Activated naive CD4-positive, alpha-beta T cell treated with anti-CD3 and anti-CD28 coated beads for 36 hours (primary cell): ENCODE measurements at regions of chr13 and their contacts with region 1.

Region 1: DNA sequence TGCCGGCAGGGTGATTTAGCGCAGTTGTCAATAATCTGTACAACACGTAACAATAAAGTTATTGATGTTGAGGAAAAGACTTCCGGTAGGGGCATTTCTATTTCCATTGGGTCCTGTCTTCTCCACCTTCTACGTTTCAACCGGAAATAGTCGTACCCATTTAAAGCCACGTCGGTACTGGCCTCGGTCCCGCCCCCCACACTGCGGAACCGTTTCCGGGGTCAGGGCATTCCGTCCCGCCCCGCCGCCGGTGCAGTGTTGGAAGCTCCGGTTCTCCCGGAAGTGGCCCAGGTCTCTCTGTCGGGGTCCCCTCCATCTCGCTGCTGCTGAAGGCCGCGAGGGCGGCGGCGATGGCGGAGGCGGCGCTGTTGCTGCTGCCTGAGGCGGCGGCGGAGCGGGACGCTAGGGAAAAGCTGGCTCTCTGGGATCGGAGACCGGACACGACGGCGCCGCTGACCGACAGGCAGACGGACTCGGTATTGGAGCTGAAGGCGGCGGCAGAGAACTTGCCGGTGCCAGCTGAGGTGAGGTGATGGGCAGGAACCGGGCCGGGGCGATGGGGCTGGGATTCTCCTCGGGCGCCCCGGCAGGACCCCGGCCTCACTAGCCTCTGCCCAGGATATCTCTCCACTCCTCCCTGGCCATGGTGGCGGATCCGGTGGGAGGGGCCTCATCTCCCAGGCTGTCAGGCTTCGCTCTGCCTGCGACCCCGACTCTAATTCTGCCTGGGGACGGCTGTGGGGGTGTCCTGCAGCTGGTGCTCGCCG is at the start of gene COG3:
- DNase-seq: peak; percentile 97
- H3K4me3 Mint-ChIP-seq: peak within 1 kb of the TSS; percentile 88
- H3K27ac Mint-ChIP-seq: peak within 1 kb of the TSS; percentile 92
- H3K4me1 Mint-ChIP-seq: peaks cover 59% of the 10 kb centered on the region
- H3K27me3 Mint-ChIP-seq: no peaks in the 10 kb centered on the region
- total RNA-seq, gene COG3: 19.1 to 19.3 TPM

Region 2: GRCh38 chr13:44141725-44142539 is 1322.9 kb before region 1 on chr13:
- CTCF ChIA-PET with region 1: no interaction called
- intact Hi-C with region 1: loop called (anchors 5 kb)
- DNase-seq: peak; percentile 95
- H3K4me3 Mint-ChIP-seq: peak overlapping the region; percentile 89
- H3K27ac Mint-ChIP-seq: peak overlapping the region; percentile 86
- H3K4me1 Mint-ChIP-seq: peaks cover 14% of the 10 kb centered on the region
- H3K27me3 Mint-ChIP-seq: no peaks in the 10 kb centered on the region

Region 3: GRCh38 chr13:45119991-45120864 is 344.6 kb before region 1 on chr13 and contains the start of gene GTF2F2:
- CTCF ChIA-PET with region 1: no interaction called
- intact Hi-C with region 1: loop called (anchors 2 kb)
- DNase-seq: peak; percentile 88
- H3K4me3 Mint-ChIP-seq: no peak within 1 kb of the TSS
- H3K27ac Mint-ChIP-seq: no peak within 1 kb of the TSS
- H3K4me1 Mint-ChIP-seq: peaks cover 9% of the 10 kb centered on the region
- H3K27me3 Mint-ChIP-seq: no peaks in the 10 kb centered on the region
- total RNA-seq, gene GTF2F2: 21.3 to 22.4 TPM

Region 4: DNA sequence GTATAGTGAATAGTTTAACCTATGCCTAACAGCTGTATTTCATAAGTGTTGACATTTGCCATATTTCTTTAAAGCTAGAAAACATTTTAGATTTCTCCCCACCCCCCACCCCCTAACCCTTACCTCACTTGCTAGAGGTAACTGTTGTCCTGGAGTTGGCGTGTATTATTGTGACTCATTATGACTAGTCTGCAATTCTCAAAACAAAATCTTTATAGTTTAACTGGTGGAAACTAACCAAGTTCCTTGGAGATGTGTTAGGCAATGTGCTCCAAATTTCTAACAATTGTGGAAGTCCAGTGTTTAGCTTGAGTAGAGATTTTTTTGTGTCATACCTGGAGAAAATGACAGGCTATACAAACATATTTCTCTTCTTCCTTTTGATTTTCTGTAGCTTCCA is 302.0 kb before region 1 on chr13:
- CTCF ChIA-PET with region 1: no interaction called
- intact Hi-C with region 1: no loop called
- DNase-seq: no peak
- H3K4me3 Mint-ChIP-seq: no peak overlapping the region
- H3K27ac Mint-ChIP-seq: no peak overlapping the region
- H3K4me1 Mint-ChIP-seq: peaks cover 7% of the 10 kb centered on the region
- H3K27me3 Mint-ChIP-seq: no peaks in the 10 kb centered on the region

Region 5: GRCh38 chr13:45340926-45341750 is 123.7 kb before region 1 on chr13 and contains the start of gene TPT1:
- CTCF ChIA-PET with region 1: interaction called, 3 read pairs
- intact Hi-C with region 1: loop called (anchors 1 kb)
- DNase-seq: peak; percentile 100
- H3K4me3 Mint-ChIP-seq: peak within 1 kb of the TSS; percentile 91
- H3K27ac Mint-ChIP-seq: peak within 1 kb of the TSS; percentile 99
- H3K4me1 Mint-ChIP-seq: peaks cover 43% of the 10 kb centered on the region
- H3K27me3 Mint-ChIP-seq: no peaks in the 10 kb centered on the region
- total RNA-seq, gene TPT1: 3,331 to 3,631 TPM

Region 6: GRCh38 chr13:45417790-45418534 is 46.9 kb before region 1 on chr13 and contains the start of gene SLC25A30:
- CTCF ChIA-PET with region 1: interaction called, 11 read pairs
- intact Hi-C with region 1: loop called (anchors 1 kb)
- DNase-seq: peak; percentile 89
- H3K4me3 Mint-ChIP-seq: peak within 1 kb of the TSS; percentile 94
- H3K27ac Mint-ChIP-seq: peak within 1 kb of the TSS; percentile 92
- H3K4me1 Mint-ChIP-seq: peaks cover 24% of the 10 kb centered on the region
- H3K27me3 Mint-ChIP-seq: no peaks in the 10 kb centered on the region
- total RNA-seq, gene SLC25A30: 13.6 to 15.1 TPM

Region 7: GRCh38 chr13:45654633-45655349 is 189.9 kb after region 1 on chr13:
- CTCF ChIA-PET with region 1: no interaction called
- intact Hi-C with region 1: no loop called
- DNase-seq: no peak
- H3K4me3 Mint-ChIP-seq: no peak overlapping the region
- H3K27ac Mint-ChIP-seq: no peak overlapping the region
- H3K4me1 Mint-ChIP-seq: no peaks in the 10 kb centered on the region
- H3K27me3 Mint-ChIP-seq: peaks cover 3% of the 10 kb centered on the region